Activated T-helper 1 cell treated with anti-CD3 and anti-CD28 coated beads, Interleukin-12 subunit alpha, Interleukin-12 subunit beta, Interleukin-2, Interleukin-4 antibody, amounts not matched to agents 30 ng/mL and 10 ng/mL and 1 ng/mL, durations not matched to agents 14 hours and 24 hours and 36 hours (primary cell): ENCODE measurements at regions of chr7 and their contacts with region 1.

Region 1: GRCh38 chr7:32502728-32503127 is 7.4 kb downstream of the AVL9 start:
- DNase-seq: no peak
- H3K4me3 Mint-ChIP-seq: no peak overlapping the region
- H3K27ac Mint-ChIP-seq: peak overlapping the region; percentile 79
- H3K4me1 Mint-ChIP-seq: peaks cover 45% of the 10 kb centered on the region
- H3K27me3 Mint-ChIP-seq: no peaks in the 10 kb centered on the region

Region 2: GRCh38 chr7:32515890-32516550 is 13.3 kb after region 1 on chr7:
- intact Hi-C with region 1: loop called (anchors 2 kb)
- DNase-seq: no peak
- H3K4me3 Mint-ChIP-seq: no peak overlapping the region
- H3K27ac Mint-ChIP-seq: peak overlapping the region; percentile 21
- H3K4me1 Mint-ChIP-seq: peaks cover 42% of the 10 kb centered on the region
- H3K27me3 Mint-ChIP-seq: no peaks in the 10 kb centered on the region

Region 3: GRCh38 chr7:32905175-32905662 is 402.5 kb after region 1 on chr7:
- intact Hi-C with region 1: no loop called
- DNase-seq: peak; percentile 83
- H3K4me3 Mint-ChIP-seq: peak overlapping the region; percentile 80
- H3K27ac Mint-ChIP-seq: peak overlapping the region; percentile 97
- H3K4me1 Mint-ChIP-seq: peaks cover 14% of the 10 kb centered on the region
- H3K27me3 Mint-ChIP-seq: no peaks in the 10 kb centered on the region